Activated CD4-positive, alpha-beta T cell treated with anti-CD3 and anti-CD28 coated beads for 36 hours (primary cell): ENCODE measurements at regions of chr12 and their contacts with region 1.

Region 1: DNA sequence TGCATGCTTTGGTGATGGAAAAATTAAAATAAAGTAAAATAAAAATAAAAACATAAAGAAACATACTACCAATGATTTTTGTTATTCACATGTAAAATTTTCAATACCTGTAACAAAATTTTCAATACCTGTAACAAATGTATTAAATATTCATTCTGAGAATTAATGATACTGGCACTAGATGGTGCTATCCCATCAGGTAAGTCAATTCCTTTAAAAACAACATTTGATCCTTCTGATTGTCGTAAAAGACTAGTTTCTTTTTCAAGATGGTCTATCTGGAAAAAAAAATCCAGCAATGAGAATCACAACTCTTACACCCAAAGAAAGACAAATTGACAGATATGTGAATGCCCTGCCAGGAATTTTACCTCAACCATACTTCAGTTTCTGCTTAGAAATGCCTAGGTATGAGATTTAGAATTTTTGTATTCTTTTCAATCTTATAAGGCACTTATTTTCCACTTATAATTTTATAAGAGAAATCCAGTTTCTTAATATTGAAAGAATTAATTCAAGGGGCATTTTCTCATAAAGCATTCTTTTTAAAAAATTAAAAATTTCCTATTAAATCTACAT is 30.7 kb downstream of the CEP290 start:
- DNase-seq: no peak
- ATAC-seq: no peak
- H3K4me3 Mint-ChIP-seq: no peak overlapping the region
- H3K27ac Mint-ChIP-seq: no peak overlapping the region
- H3K4me1 Mint-ChIP-seq: peaks cover 2% of the 10 kb centered on the region
- H3K27me3 Mint-ChIP-seq: no peaks in the 10 kb centered on the region

Region 2: GRCh38 chr12:87690236-87690810 is 420.8 kb before region 1 on chr12:
- CTCF ChIA-PET with region 1: no interaction called
- POLR2A ChIA-PET with region 1: no interaction called
- intact Hi-C with region 1: no loop called
- DNase-seq: no peak
- ATAC-seq: no peak
- H3K4me3 Mint-ChIP-seq: no peak overlapping the region
- H3K27ac Mint-ChIP-seq: no peak overlapping the region
- H3K4me1 Mint-ChIP-seq: no peaks in the 10 kb centered on the region
- H3K27me3 Mint-ChIP-seq: no peaks in the 10 kb centered on the region

Region 3: DNA sequence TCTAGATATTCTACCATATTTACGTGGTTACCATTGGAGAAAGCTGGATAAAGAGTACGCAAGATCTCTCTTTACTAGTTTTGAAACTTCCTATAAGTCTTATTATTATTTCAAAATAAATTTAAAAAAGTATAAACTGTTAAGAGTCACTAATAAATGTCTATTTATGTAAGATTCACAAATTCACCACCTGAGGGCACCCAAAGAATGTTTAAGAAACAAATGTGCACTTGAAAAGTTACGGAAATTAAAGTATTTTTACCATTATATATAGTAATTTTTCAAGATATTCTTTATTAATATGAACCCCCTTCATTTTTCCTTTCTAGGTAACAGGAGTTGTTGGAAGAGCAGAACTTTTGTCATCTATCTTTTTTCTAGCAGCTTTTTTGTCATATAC is 42.8 kb after region 1 on chr12:
- CTCF ChIA-PET with region 1: no interaction called
- POLR2A ChIA-PET with region 1: no interaction called
- intact Hi-C with region 1: no loop called
- DNase-seq: no peak
- ATAC-seq: no peak
- H3K4me3 Mint-ChIP-seq: no peak overlapping the region
- H3K27ac Mint-ChIP-seq: no peak overlapping the region
- H3K4me1 Mint-ChIP-seq: peaks cover 22% of the 10 kb centered on the region
- H3K27me3 Mint-ChIP-seq: no peaks in the 10 kb centered on the region

Region 4: GRCh38 chr12:88393017-88393767 is 282.0 kb after region 1 on chr12:
- CTCF ChIA-PET with region 1: no interaction called
- POLR2A ChIA-PET with region 1: no interaction called
- intact Hi-C with region 1: loop called in 1 of 2 experiments (anchors 5 kb)
- DNase-seq: no peak
- ATAC-seq: peak; percentile 37
- H3K4me3 Mint-ChIP-seq: no peak overlapping the region
- H3K27ac Mint-ChIP-seq: no peak overlapping the region
- H3K4me1 Mint-ChIP-seq: peaks cover 11% of the 10 kb centered on the region
- H3K27me3 Mint-ChIP-seq: peaks cover 11% of the 10 kb centered on the region

Region 5: GRCh38 chr12:88993651-88994050 is 882.5 kb after region 1 on chr12:
- CTCF ChIA-PET with region 1: no interaction called
- POLR2A ChIA-PET with region 1: no interaction called
- intact Hi-C with region 1: loop called in 1 of 2 experiments (anchors 5 kb)
- DNase-seq: no peak
- ATAC-seq: no peak
- H3K4me3 Mint-ChIP-seq: no peak overlapping the region
- H3K27ac Mint-ChIP-seq: no peak overlapping the region
- H3K4me1 Mint-ChIP-seq: no peaks in the 10 kb centered on the region
- H3K27me3 Mint-ChIP-seq: peaks cover 15% of the 10 kb centered on the region